B cell (primary cell): ENCODE measurements at regions of chr12 and their contacts with region 1.

Region 1: GRCh38 chr12:101839324-101840283 is 8.8 kb upstream of the GNPTAB start:
- DNase-seq: peak; percentile 80
- ATAC-seq: peak; percentile 72
- H3K4me3 ChIP-seq: no peak overlapping the region
- H3K4me3 Mint-ChIP-seq: no peak overlapping the region
- H3K27ac ChIP-seq: peak overlapping the region in 1 of 2 donors; percentile 59
- H3K27ac Mint-ChIP-seq: no peak overlapping the region
- H3K4me1 ChIP-seq: peaks cover 17 to 18% of the 10 kb centered on the region in 2 donors
- H3K4me1 Mint-ChIP-seq: peaks cover 19% of the 10 kb centered on the region
- H3K27me3 ChIP-seq: no peaks in the 10 kb centered on the region
- H3K27me3 Mint-ChIP-seq: no peaks in the 10 kb centered on the region
- CTCF ChIP-seq: peak; percentile 93

Region 2: DNA sequence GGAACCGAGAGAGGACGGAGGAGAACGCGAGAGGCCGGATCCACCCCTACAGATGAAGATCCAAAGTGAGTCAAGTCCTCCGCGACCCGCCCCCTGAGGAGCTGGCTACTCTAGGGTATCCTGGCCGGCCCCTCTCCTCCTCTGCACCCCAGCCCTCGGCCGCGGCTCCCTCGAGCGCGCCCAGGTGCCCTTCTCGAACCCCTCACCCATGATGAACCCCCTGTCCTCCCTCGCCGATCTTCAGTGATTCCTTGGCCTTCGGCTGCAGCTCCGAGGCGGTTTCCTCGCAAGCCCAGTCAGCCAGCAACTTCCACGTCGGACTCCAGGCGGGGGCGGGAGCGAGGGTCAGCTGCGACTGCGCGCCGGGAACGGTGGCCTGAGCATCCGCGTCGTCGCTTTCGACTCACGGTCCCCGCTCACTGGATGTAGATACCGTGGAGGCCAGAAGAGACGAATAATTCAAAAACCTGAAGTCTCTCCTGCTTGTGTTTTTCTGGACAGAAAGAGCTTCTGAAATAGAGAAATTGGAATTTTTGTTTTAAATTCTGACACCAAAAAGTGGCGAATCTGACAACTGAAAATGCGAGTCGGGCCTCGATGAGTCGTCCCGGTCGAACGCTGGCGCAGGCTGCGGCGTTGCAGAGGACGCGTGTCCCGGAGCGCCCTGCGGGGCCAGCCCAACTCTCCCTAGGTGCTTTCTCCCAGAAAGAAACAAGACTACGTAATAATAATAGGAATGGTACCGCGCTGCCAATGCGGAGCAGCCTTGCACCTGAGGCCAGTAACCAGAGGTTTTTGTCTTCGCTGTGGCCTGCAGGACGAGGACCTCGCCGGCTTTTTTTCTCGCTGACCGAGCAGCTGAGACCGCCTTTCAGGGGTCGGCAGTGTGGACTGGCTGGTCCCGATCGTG is 431.9 kb before region 1 on chr12 and contains the start of gene ARL1:
- CTCF ChIA-PET with region 1: interaction called, 20 read pairs
- POLR2A ChIA-PET with region 1: no interaction called
- intact Hi-C with region 1: loop called (anchors 2 kb)
- DNase-seq: peak; percentile 92
- ATAC-seq: peak; percentile 86
- H3K4me3 ChIP-seq: peak within 1 kb of the TSS; percentile 80 to 95 (median 93)
- H3K4me3 Mint-ChIP-seq: peak within 1 kb of the TSS; percentile 99
- H3K27ac ChIP-seq: peak within 1 kb of the TSS; percentile 91 to 96
- H3K27ac Mint-ChIP-seq: peak within 1 kb of the TSS; percentile 97
- H3K4me1 ChIP-seq: peaks cover 9 to 12% of the 10 kb centered on the region in 2 donors
- H3K4me1 Mint-ChIP-seq: peaks cover 28% of the 10 kb centered on the region
- H3K27me3 ChIP-seq: no peaks in the 10 kb centered on the region
- H3K27me3 Mint-ChIP-seq: peaks cover 5% of the 10 kb centered on the region
- CTCF ChIP-seq: no peak
- total RNA-seq, gene ARL1: 40.7 and 51.2 TPM in 2 replicates

Region 3: GRCh38 chr12:101490286-101490920 is 349.2 kb before region 1 on chr12:
- CTCF ChIA-PET with region 1: interaction called, 33 read pairs
- POLR2A ChIA-PET with region 1: no interaction called
- intact Hi-C with region 1: loop called (anchors 1 kb)
- DNase-seq: peak; percentile 48
- ATAC-seq: peak; percentile 69
- H3K4me3 ChIP-seq: no peak overlapping the region
- H3K4me3 Mint-ChIP-seq: no peak overlapping the region
- H3K27ac ChIP-seq: no peak overlapping the region
- H3K27ac Mint-ChIP-seq: no peak overlapping the region
- H3K4me1 ChIP-seq: no peaks in the 10 kb centered on the region
- H3K4me1 Mint-ChIP-seq: no peaks in the 10 kb centered on the region
- H3K27me3 ChIP-seq: no peaks in the 10 kb centered on the region
- H3K27me3 Mint-ChIP-seq: no peaks in the 10 kb centered on the region
- CTCF ChIP-seq: peak; percentile 61

Region 4: GRCh38 chr12:101743724-101744472 is 95.7 kb before region 1 on chr12:
- CTCF ChIA-PET with region 1: interaction called, 18 read pairs
- POLR2A ChIA-PET with region 1: no interaction called
- intact Hi-C with region 1: no loop called
- DNase-seq: peak; percentile 95
- ATAC-seq: peak; percentile 86
- H3K4me3 ChIP-seq: peak overlapping the region in 1 of 5 experiments; percentile 42
- H3K4me3 Mint-ChIP-seq: peak overlapping the region; percentile 48
- H3K27ac ChIP-seq: peak overlapping the region; percentile 94 to 97
- H3K27ac Mint-ChIP-seq: peak overlapping the region; percentile 99
- H3K4me1 ChIP-seq: peaks cover 45 to 50% of the 10 kb centered on the region in 2 donors
- H3K4me1 Mint-ChIP-seq: peaks cover 70% of the 10 kb centered on the region
- H3K27me3 ChIP-seq: no peaks in the 10 kb centered on the region
- H3K27me3 Mint-ChIP-seq: no peaks in the 10 kb centered on the region
- CTCF ChIP-seq: peak; percentile 59

Region 5: DNA sequence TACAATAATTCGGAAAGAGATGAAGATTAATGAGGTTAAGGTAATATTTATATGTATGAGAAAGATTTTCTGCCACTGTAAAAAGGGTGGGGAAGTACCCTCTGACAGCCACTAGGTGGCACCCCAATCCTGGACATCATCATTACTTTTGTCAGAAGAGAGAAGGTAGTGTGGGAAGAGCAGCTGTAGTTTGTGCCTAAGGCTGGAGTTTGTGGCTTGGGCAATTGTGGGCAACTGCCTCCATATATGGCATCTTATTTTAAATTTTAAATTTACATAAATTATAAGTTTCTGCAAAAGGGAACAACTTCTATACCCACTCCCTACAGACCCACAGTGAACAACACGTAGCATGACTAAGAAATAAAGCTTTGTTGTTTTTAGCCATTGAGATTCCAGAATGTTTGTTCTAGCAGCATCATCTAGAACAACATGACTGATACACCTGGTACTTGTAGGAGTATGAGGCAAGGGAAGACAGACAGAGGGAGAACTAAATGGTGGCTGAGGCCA is 65.9 kb before region 1 on chr12:
- CTCF ChIA-PET with region 1: interaction called, 138 read pairs
- POLR2A ChIA-PET with region 1: interaction called, 7 read pairs
- intact Hi-C with region 1: loop called (anchors 1 kb)
- DNase-seq: peak; percentile 77
- ATAC-seq: peak; percentile 86
- H3K4me3 ChIP-seq: no peak overlapping the region
- H3K4me3 Mint-ChIP-seq: no peak overlapping the region
- H3K27ac ChIP-seq: no peak overlapping the region
- H3K27ac Mint-ChIP-seq: no peak overlapping the region
- H3K4me1 ChIP-seq: no peaks in the 10 kb centered on the region
- H3K4me1 Mint-ChIP-seq: peaks cover 1% of the 10 kb centered on the region
- H3K27me3 ChIP-seq: no peaks in the 10 kb centered on the region
- H3K27me3 Mint-ChIP-seq: no peaks in the 10 kb centered on the region
- CTCF ChIP-seq: peak; percentile 98

Region 6: DNA sequence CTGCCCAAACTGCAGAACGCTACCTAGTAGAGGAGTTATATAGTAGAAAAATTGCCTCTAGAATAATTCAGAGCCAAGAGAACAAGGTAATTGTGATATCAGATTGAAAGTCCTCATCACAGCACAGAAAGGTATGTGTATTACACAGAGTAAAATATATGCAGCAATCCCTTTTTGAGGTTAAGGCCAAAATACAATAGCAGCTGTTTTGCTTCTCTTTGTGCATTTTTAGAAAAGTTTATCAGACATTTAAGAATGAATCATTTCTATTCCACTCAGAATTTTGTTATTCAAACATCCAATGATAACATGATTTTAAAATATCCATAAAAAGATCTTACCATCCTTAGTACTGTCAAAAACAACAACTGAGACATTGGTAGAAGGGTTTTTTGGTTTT is 53.9 kb before region 1 on chr12:
- CTCF ChIA-PET with region 1: interaction called, 31 read pairs
- POLR2A ChIA-PET with region 1: no interaction called
- intact Hi-C with region 1: no loop called
- DNase-seq: no peak
- ATAC-seq: no peak
- H3K4me3 ChIP-seq: no peak overlapping the region
- H3K4me3 Mint-ChIP-seq: no peak overlapping the region
- H3K27ac ChIP-seq: no peak overlapping the region
- H3K27ac Mint-ChIP-seq: no peak overlapping the region
- H3K4me1 ChIP-seq: peaks cover 4 to 5% of the 10 kb centered on the region in 2 donors
- H3K4me1 Mint-ChIP-seq: peaks cover 7% of the 10 kb centered on the region
- H3K27me3 ChIP-seq: no peaks in the 10 kb centered on the region
- H3K27me3 Mint-ChIP-seq: no peaks in the 10 kb centered on the region
- CTCF ChIP-seq: no peak

Region 7: DNA sequence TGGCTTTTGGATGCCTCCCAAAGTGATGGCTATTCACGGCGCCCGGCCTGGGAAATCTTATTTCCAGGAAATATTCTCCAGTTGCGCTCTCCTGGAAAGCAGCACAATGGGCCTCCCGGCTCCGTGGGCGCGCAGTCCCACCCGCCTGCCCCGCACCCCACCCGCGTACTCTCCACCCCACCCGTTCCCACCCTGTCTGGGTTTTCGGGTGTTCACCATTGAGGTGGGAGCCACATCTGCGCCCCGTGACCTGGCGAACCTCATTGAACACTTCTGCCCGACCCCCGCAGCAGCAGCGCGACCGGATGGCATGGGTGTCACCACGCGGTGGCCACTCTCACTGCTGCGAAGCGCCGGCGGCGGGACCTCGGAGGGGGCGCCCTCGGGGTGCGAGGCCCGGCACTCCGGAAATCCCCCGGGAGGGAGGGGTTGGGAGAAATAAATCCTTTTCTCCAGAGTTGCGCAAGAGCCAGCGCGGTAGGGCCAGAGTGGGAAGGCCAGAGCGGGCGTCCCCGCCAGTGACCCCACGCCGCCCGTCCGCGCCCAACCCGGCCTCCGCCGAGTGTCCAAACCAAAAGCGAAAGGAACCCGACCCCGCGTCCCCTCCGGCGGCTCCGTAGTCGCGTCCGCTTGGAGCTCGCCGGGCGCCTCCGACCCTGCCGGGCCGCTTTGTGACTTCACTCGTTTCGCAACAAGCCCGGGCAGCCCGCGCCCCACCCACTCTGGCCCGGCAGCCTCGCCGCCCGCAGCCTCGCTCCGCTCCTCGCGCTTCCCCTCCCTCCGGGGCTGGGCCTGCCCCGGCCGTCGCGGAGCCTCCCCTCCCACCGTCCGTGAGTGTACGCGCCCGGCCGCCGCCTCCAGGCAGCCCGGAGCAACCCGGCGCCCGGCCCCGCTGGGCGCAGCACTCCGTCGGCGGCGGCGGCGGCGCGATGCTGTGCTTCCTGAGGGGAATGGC is 37.5 kb after region 1 on chr12 and contains the start of gene DRAM1:
- CTCF ChIA-PET with region 1: interaction called, 10 read pairs
- POLR2A ChIA-PET with region 1: no interaction called
- intact Hi-C with region 1: no loop called
- DNase-seq: peak; percentile 90
- ATAC-seq: peak; percentile 87
- H3K4me3 ChIP-seq: peak within 1 kb of the TSS; percentile 80 to 92 (median 86)
- H3K4me3 Mint-ChIP-seq: peak within 1 kb of the TSS; percentile 90
- H3K27ac ChIP-seq: peak within 1 kb of the TSS; percentile 84 to 85
- H3K27ac Mint-ChIP-seq: peak within 1 kb of the TSS; percentile 88
- H3K4me1 ChIP-seq: peaks cover 6 to 14% of the 10 kb centered on the region in 2 donors
- H3K4me1 Mint-ChIP-seq: peaks cover 20% of the 10 kb centered on the region
- H3K27me3 ChIP-seq: no peaks in the 10 kb centered on the region
- H3K27me3 Mint-ChIP-seq: no peaks in the 10 kb centered on the region
- CTCF ChIP-seq: peak; percentile 25
- total RNA-seq, gene DRAM1: 7.9 and 10.2 TPM in 2 replicates